ENCODE measurements at regions of chr6 and their contacts with region 1.

Region 1: DNA sequence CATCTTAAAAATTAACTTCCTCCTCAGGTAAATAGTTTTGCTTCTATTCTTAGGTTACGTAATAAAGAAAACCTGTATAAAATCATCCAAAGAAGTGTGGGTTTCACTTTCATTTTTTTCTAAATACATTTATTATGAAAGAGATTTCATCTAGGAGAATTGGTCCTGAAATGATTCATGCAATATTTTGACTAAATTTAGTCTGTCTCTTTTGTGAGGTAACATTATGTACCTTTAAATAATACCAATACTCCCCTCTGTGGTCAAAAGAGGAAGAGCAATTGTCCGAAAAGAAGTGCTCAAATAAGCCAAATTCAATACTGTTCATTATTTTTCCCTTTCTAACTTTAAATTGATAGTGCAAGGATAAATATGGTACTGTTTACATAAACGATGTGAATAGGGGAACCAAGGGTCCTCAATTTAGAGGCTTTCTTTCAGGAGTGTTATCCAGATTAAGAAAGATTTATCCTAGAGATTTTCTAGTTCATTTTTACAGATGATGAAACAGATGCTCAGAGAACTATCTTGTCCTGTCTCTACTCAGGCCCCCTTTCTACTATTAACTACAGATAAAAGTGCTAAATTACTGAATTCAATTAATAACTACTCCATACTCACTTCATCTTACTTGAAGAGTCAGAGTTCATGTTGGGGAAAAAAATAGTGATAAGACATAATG is 26.2 kb downstream of the CYP39A1 start:
- DNase-seq: peak in 4 of 5 donors; percentile 3 to 29 (median 12)
- H3K4me3 ChIP-seq: no peak overlapping the region
- H3K4me3 Mint-ChIP-seq: peak overlapping the region in 5 of 8 donors; percentile 29 to 70 (median 51)
- H3K27ac ChIP-seq: no peak overlapping the region
- H3K27ac Mint-ChIP-seq: no peak overlapping the region
- H3K4me1 ChIP-seq: peaks cover 3% of the 10 kb centered on the region
- H3K4me1 Mint-ChIP-seq: peaks cover 5 to 11% (median 7%) of the 10 kb centered on the region in 4 donors
- H3K27me3 ChIP-seq: no peaks in the 10 kb centered on the region
- H3K27me3 Mint-ChIP-seq: peaks cover 3% of the 10 kb centered on the region in 2 donors

Region 2: GRCh38 chr6:46419576-46420002 is 206.8 kb before region 1 on chr6:
- CTCF ChIA-PET with region 1: no interaction called
- POLR2A ChIA-PET with region 1: no interaction called
- intact Hi-C with region 1: loop called (anchors 1 kb)
- DNase-seq: peak in 3 of 5 donors; percentile 3 to 5 (median 4)
- H3K4me3 ChIP-seq: no peak overlapping the region
- H3K4me3 Mint-ChIP-seq: no peak overlapping the region
- H3K27ac ChIP-seq: no peak overlapping the region
- H3K27ac Mint-ChIP-seq: no peak overlapping the region
- H3K4me1 ChIP-seq: no peaks in the 10 kb centered on the region
- H3K4me1 Mint-ChIP-seq: no peaks in the 10 kb centered on the region
- H3K27me3 ChIP-seq: no peaks in the 10 kb centered on the region
- H3K27me3 Mint-ChIP-seq: peaks cover 5 to 13% of the 10 kb centered on the region in 2 donors

Region 3: DNA sequence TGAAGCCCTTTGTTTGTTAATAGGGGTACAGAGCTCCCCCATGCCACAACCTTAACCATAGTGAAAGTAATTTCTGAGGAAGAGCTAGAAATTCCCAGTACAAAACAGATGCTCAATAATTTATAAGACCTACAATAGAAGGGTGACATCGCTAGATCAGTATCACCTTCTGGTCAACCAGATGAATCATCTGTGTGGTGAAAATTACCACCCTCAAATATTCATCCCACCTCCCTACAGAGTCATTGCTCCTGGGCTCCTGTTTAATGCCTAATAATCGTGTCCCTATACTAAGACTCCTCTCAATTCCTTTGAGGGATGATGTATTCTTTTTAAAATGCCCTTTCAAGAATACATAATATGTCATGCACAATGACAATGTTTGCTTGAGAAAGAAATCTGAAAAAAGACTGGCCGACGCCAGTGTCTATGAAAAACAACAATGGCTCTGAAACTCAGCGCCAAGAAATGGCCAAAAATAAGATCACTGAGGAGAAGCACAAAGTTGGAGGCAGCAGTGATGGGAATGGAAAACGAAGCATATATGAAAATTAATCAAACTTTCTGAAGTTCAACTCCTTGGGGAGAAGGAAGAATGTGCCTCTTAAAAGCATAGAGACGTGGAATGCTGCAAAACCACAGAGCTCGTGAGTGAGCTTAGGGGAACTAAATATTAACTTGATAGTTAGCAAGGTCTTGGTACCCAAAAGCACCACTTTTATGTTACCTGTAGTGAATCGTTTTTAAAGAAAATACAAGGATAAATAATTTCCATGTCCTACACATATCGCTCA is 306.4 kb after region 1 on chr6:
- CTCF ChIA-PET with region 1: no interaction called
- POLR2A ChIA-PET with region 1: no interaction called
- intact Hi-C with region 1: no loop called
- DNase-seq: no peak
- H3K4me3 ChIP-seq: no peak overlapping the region
- H3K4me3 Mint-ChIP-seq: no peak overlapping the region
- H3K27ac ChIP-seq: no peak overlapping the region
- H3K27ac Mint-ChIP-seq: no peak overlapping the region
- H3K4me1 ChIP-seq: no peaks in the 10 kb centered on the region
- H3K4me1 Mint-ChIP-seq: no peaks in the 10 kb centered on the region
- H3K27me3 ChIP-seq: no peaks in the 10 kb centered on the region
- H3K27me3 Mint-ChIP-seq: peaks cover 0 to 2% of the 10 kb centered on the region in 2 donors

Measured in CD4-positive, alpha-beta memory T cell (primary cell).